Activated CD8-positive, alpha-beta T cell treated with anti-CD3 and anti-CD28 coated beads, Interleukin-2, amount 10 ng/mL, durations not matched to agents 7 days and 5 days (primary cell): ENCODE measurements at regions of chr2 and their contacts with region 1.

Region 1: DNA sequence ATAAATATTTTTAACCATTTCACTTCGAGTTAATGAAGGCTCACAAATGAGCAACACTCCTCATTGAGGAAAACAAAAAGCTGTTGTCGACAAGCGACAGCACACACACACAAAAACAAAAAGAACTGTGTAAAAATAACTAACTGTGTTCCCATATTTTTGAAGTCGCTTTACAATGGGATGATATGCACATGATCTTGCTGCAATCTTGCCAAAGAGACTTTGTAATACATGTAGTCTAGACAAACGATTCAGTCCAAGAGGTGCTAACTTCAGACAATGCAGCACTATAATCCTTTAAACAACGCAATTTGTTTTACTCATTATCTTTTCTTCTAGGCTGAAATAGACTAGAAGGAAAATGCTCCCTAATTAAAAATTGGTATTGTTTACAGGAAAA is 7.2 kb upstream of the USP34 start:
- DNase-seq: no peak
- ATAC-seq: no peak
- H3K4me3 Mint-ChIP-seq: no peak overlapping the region
- H3K27ac Mint-ChIP-seq: no peak overlapping the region
- H3K4me1 Mint-ChIP-seq: no peaks in the 10 kb centered on the region
- H3K27me3 Mint-ChIP-seq: no peaks in the 10 kb centered on the region

Region 2: DNA sequence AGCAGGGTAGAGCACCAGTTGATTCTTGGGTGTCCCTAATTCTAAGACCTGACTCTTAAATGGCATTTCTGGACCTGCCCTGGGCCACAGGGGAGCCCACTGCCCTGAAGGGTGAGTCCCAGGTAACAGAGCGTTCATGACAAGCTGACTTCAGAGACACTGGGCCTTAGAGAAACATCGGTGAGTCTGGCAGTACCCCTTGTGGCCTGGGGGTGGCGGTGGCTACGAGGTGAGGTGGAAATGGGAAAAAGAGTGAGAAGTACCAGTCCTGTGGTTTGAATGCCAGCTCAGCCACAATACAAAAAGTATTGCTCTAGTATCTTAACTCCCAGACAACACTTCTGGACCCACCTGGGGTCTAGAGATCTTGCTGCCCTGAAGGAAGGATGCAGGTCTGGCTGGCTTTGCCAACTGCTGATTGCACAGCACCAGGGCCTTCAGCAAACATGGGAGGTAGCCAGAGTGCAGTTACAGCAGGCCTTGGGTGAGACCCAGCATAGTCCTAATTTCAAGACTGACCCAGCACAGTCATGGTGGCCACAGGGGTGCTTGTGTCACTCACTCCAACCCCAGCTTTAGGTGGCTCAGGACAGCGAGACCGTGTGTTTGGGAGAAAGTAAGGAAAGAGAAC is 51.7 kb before region 1 on chr2:
- CTCF ChIA-PET with region 1: interaction called, 14 read pairs
- POLR2A ChIA-PET with region 1: no interaction called
- DNase-seq: peak; percentile 78
- ATAC-seq: peak; percentile 84
- H3K4me3 Mint-ChIP-seq: no peak overlapping the region
- H3K27ac Mint-ChIP-seq: peak overlapping the region; percentile 22
- H3K4me1 Mint-ChIP-seq: peaks cover 39% of the 10 kb centered on the region
- H3K27me3 Mint-ChIP-seq: no peaks in the 10 kb centered on the region